Ascending aorta (tissue), 2 donors: ENCODE measurements at regions of chr9 and their contacts with region 1.

Region 1: DNA sequence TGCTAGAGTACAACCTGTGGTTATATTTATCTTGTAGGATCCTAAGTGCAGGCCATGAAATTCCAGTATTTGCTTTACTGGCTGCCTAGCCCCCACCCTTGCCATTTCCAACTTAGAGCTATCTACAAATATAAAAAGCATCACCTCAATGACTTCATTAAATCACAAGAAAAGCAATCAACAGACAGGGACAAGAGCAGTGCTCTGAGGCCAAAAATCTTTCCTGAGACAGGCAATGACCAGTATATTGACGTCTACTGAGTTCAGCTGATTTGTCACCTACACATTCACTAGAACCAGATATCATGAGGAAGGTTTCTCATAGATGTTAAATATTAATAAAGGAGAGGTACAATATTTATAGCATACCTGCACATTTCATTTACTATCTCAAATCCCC is 38.4 kb upstream of the CTNNAL1 start:
- DNase-seq: no peak
- H3K4me3 ChIP-seq: no peak overlapping the region
- H3K27ac ChIP-seq: peak overlapping the region in 1 of 2 donors; percentile 3
- H3K4me1 ChIP-seq: peaks cover 0 to 9% of the 10 kb centered on the region in 2 donors
- H3K27me3 ChIP-seq: no peaks in the 10 kb centered on the region
- CTCF ChIP-seq: no peak

Region 2: GRCh38 chr9:109035684-109036423 is 15.9 kb before region 1 on chr9:
- intact Hi-C with region 1: no loop called
- DNase-seq: peak in 1 of 2 donors; percentile 74
- H3K4me3 ChIP-seq: no peak overlapping the region
- H3K27ac ChIP-seq: peak overlapping the region in 1 of 2 donors; percentile 55
- H3K4me1 ChIP-seq: peaks cover 0 to 11% of the 10 kb centered on the region in 2 donors
- H3K27me3 ChIP-seq: no peaks in the 10 kb centered on the region
- CTCF ChIP-seq: no peak

Region 3: GRCh38 chr9:109068764-109069163 is 17.0 kb after region 1 on chr9:
- intact Hi-C with region 1: loop called (anchors 1 kb)
- DNase-seq: no peak
- H3K4me3 ChIP-seq: no peak overlapping the region
- H3K27ac ChIP-seq: no peak overlapping the region
- H3K4me1 ChIP-seq: no peaks in the 10 kb centered on the region
- H3K27me3 ChIP-seq: no peaks in the 10 kb centered on the region
- CTCF ChIP-seq: no peak

Region 4: DNA sequence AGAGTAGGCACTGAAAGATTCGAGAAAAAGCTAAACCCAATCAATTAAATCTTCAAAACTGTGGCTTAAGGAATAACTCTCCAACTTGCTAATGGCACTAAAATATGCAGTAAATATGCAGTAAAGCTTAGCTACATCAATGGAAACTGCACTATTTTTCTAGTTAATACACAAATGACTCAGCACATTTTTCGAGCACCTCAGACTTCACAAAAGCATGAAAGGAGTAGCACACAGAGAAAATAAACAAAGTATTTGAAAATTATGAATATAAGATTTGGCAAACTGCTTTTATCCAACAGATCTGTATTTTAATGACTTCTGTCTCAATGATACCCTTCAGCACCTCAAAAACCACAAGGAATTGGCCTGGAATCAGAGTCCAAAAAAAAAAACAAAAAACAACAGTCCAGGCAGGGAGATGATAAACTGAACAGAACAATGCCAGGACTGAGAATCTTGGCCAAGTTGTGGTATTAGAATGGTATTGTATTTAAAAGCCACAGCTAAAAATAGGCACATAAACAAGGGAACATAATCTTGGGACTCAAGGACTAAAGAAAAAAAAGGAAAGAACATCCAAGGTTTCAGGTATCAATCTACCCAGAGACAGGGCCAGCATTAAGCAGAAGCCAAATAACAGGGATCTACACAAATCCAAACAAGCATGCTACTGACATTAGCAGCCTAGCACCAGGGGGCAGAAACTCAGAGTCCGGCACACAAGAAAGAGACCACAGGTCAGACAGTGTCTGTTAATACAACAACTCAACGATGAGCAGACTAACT is 46.6 kb after region 1 on chr9:
- intact Hi-C with region 1: no loop called
- DNase-seq: no peak
- H3K4me3 ChIP-seq: peak overlapping the region; percentile 23 to 27
- H3K27ac ChIP-seq: peak overlapping the region; percentile 54 to 60
- H3K4me1 ChIP-seq: peaks cover 4 to 38% of the 10 kb centered on the region in 2 donors
- H3K27me3 ChIP-seq: no peaks in the 10 kb centered on the region
- CTCF ChIP-seq: peak in 1 of 3 experiments; percentile 28